ENCODE measurements at regions of chr1 and their contacts with region 1.

Region 1: DNA sequence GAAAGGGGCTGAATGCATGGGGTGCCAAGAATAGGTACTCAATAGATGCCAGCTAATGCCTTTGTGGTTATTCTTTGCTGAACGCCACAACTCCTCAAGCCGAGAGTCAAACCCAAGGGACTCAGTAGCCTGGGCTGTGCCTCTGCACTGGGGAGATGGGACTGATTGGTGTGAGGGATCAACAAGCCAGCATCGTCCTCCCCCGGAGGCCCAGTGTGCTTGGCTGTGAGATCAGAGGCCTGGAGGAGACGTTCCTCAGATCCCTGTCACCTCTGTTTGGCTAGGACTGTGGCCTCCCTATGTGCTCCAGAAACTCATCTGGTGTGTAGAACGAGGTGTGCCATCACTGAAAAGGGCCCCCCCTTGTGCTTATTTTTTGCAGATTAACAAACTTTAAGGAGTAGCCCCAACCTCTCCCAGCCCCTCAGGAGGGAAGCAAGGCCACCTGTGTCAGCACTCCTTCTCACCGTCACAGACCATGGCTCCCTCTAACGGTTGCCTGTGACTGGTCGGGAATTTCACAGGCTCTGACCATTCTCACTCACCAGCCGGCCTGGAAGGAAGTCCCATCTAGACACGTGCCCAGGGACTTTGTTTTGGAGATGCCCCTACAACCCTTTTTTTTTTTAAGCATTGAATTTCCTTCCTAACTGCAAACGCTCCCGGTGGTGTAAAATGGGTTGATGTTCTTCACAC is 194.0 kb upstream of the VAMP3 start:
- DNase-seq: peak in 1 of 3 donors; percentile 47
- ATAC-seq: peak in 1 of 2 donors; percentile 41
- H3K4me3 ChIP-seq: no peak overlapping the region
- H3K27ac ChIP-seq: no peak overlapping the region
- H3K4me1 ChIP-seq: peaks cover 4% of the 10 kb centered on the region
- H3K27me3 ChIP-seq: no peaks in the 10 kb centered on the region

Region 2: GRCh38 chr1:6464514-6464836 is 1112.6 kb before region 1 on chr1:
- intact Hi-C with region 1: no loop called
- DNase-seq: peak; percentile 67 to 89 (median 84)
- ATAC-seq: peak; percentile 45 to 49
- H3K4me3 ChIP-seq: no peak overlapping the region
- H3K27ac ChIP-seq: no peak overlapping the region
- H3K4me1 ChIP-seq: no peaks in the 10 kb centered on the region
- H3K27me3 ChIP-seq: no peaks in the 10 kb centered on the region

Region 3: GRCh38 chr1:7454052-7454815 is 122.9 kb before region 1 on chr1:
- intact Hi-C with region 1: loop called in 1 of 4 experiments (anchors 10 kb)
- DNase-seq: peak in 2 of 3 donors; percentile 70 to 81
- ATAC-seq: peak; percentile 58 to 59
- H3K4me3 ChIP-seq: no peak overlapping the region
- H3K27ac ChIP-seq: no peak overlapping the region
- H3K4me1 ChIP-seq: no peaks in the 10 kb centered on the region
- H3K27me3 ChIP-seq: no peaks in the 10 kb centered on the region

Region 4: DNA sequence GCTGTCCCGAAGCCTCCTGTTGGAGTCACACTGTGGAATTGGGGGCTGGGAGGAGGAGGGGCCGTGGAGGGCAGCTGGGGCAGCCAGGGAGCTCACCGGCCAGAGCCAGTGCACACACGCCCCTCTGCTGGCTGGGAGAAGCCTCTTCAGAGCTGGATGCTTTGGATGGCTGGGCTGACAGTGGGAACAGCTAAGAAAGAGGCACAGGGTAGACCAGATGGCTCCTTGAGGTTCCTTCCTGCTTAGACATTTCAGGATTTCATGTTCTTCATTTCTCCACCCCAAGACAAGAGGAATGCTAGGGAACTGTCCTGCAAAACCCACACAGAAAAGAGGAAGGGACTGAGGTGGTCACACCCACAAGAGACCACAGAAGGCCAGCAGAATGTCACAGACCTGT is 60.8 kb before region 1 on chr1:
- intact Hi-C with region 1: loop called in 1 of 4 experiments (anchors 10 kb)
- DNase-seq: peak in 1 of 3 donors; percentile 72
- ATAC-seq: peak; percentile 48 to 52
- H3K4me3 ChIP-seq: no peak overlapping the region
- H3K27ac ChIP-seq: no peak overlapping the region
- H3K4me1 ChIP-seq: peaks cover 7% of the 10 kb centered on the region
- H3K27me3 ChIP-seq: no peaks in the 10 kb centered on the region

Region 5: DNA sequence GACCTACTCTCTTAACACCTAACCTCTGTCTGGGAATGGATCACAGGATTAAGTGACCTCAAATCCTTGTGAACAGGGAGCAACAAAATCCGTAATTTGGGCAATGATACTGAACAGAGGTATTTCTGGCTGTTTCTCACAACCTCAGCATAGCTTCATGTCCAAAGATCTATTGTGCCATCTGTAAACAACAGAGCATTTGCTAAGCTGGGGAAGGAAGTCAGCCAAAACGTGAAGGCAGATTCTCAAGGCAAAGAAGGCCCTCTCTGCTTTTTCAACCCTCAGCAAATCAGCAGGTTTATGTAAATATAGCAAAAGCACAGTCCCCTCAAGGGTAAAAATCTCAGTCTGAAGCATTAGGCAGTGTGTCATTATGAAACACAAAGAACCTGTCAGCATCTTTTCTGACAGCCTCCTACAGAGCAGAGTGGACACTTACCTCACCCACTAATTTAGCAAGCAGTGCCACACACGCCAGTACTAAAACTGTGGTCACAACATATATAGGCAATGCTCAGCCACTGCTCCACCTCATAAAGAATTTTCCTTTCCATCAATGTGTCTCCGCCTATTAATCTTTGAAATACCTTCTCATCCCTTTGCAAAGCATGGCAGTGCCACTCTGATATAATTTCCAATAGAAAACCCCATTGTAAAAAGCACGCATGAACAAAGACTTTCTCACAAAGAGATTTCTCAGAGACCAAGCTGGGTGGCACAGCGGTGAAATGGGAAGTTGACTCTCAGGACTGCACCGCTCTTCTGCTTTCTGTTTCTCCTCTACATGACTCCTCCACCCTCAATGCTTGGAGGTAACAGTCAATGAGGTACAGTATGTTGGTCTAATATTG is 1052.4 kb after region 1 on chr1:
- intact Hi-C with region 1: no loop called
- DNase-seq: no peak
- ATAC-seq: peak; percentile 63 to 74
- H3K4me3 ChIP-seq: no peak overlapping the region
- H3K27ac ChIP-seq: peak overlapping the region; percentile 50
- H3K4me1 ChIP-seq: peaks cover 11% of the 10 kb centered on the region
- H3K27me3 ChIP-seq: no peaks in the 10 kb centered on the region